CD8-positive, alpha-beta T cell (primary cell): ENCODE measurements at regions of chr4 and their contacts with region 1.

Region 1: GRCh38 chr4:112145326-112145819 is at the start of gene FAM241A:
- DNase-seq: peak; percentile 84 to 95 (median 90)
- ATAC-seq: peak; percentile 96
- H3K4me3 ChIP-seq: peak within 1 kb of the TSS; percentile 75 to 78
- H3K4me3 Mint-ChIP-seq: peak within 1 kb of the TSS; percentile 98
- H3K27ac ChIP-seq: peak within 1 kb of the TSS; percentile 69
- H3K27ac Mint-ChIP-seq: peak within 1 kb of the TSS; percentile 94
- H3K4me1 ChIP-seq: peaks cover 10% of the 10 kb centered on the region
- H3K4me1 Mint-ChIP-seq: peaks cover 29% of the 10 kb centered on the region
- H3K27me3 ChIP-seq: no peaks in the 10 kb centered on the region
- H3K27me3 Mint-ChIP-seq: no peaks in the 10 kb centered on the region
- CTCF ChIP-seq: no peak
- total RNA-seq, gene FAM241A: 0.67 to 0.90 TPM

Region 2: DNA sequence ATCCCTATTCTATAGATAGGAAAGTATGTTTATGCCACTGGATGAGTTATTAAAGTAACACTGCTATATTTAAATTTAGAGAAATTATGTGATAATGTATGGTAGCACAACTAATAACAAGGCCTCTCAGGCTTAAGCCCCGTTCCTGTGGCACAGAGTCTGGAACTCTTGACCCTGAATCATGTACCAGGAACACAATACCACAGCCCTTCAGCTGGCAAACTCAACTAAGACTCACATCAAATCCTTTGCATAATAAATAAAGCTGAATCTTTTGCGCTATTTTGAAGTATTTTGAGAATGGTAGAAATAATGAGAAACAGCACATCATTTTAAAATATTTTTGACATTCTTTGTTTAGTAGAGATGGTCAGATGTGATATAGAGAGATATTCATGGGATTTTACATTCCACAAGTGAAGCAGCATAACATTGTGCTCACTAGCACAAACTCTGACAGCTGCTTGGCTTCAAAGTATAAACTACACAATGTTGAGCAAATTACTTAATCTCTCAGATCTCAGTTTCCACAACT is 478.5 kb before region 1 on chr4:
- CTCF ChIA-PET with region 1: no interaction called
- POLR2A ChIA-PET with region 1: no interaction called
- intact Hi-C with region 1: no loop called
- DNase-seq: no peak
- ATAC-seq: no peak
- H3K4me3 ChIP-seq: no peak overlapping the region
- H3K4me3 Mint-ChIP-seq: no peak overlapping the region
- H3K27ac ChIP-seq: no peak overlapping the region
- H3K27ac Mint-ChIP-seq: no peak overlapping the region
- H3K4me1 ChIP-seq: no peaks in the 10 kb centered on the region
- H3K4me1 Mint-ChIP-seq: no peaks in the 10 kb centered on the region
- H3K27me3 ChIP-seq: no peaks in the 10 kb centered on the region
- H3K27me3 Mint-ChIP-seq: no peaks in the 10 kb centered on the region
- CTCF ChIP-seq: no peak

Region 3: DNA sequence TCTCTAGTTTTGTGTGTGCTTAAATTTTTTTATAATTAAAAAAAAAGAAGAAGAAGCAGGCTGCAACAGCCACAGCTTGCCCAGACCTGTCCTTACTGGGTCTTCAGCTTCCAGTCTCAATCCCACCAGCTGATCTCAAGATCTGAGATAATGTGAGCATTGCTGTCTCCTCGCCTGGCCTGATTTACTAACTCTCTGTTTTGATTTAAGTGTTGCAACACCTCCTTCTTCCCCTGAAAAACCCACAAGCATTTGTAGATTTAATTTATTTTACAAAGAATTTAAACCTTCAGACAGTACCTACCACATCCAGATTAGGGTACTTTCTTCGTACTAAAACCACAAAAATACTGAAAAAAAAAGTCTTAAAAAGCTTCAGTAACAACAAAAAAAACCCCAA is 37.9 kb after region 1 on chr4:
- CTCF ChIA-PET with region 1: no interaction called
- POLR2A ChIA-PET with region 1: no interaction called
- intact Hi-C with region 1: loop called (anchors 5 kb)
- DNase-seq: peak in 2 of 9 experiments; percentile 28 to 65
- ATAC-seq: peak; percentile 77
- H3K4me3 ChIP-seq: no peak overlapping the region
- H3K4me3 Mint-ChIP-seq: peak overlapping the region; percentile 5
- H3K27ac ChIP-seq: no peak overlapping the region
- H3K27ac Mint-ChIP-seq: peak overlapping the region; percentile 27
- H3K4me1 ChIP-seq: peaks cover 26% of the 10 kb centered on the region
- H3K4me1 Mint-ChIP-seq: peaks cover 43% of the 10 kb centered on the region
- H3K27me3 ChIP-seq: no peaks in the 10 kb centered on the region
- H3K27me3 Mint-ChIP-seq: no peaks in the 10 kb centered on the region
- CTCF ChIP-seq: no peak

Region 4: GRCh38 chr4:112321776-112322684 is 176.7 kb after region 1 on chr4:
- CTCF ChIA-PET with region 1: no interaction called
- POLR2A ChIA-PET with region 1: no interaction called
- intact Hi-C with region 1: loop called in 1 of 2 experiments (anchors 5 kb)
- DNase-seq: peak; percentile 58 to 85 (median 76)
- ATAC-seq: peak; percentile 99
- H3K4me3 ChIP-seq: no peak overlapping the region
- H3K4me3 Mint-ChIP-seq: no peak overlapping the region
- H3K27ac ChIP-seq: no peak overlapping the region
- H3K27ac Mint-ChIP-seq: no peak overlapping the region
- H3K4me1 ChIP-seq: peaks cover 10% of the 10 kb centered on the region
- H3K4me1 Mint-ChIP-seq: peaks cover 5% of the 10 kb centered on the region
- H3K27me3 ChIP-seq: no peaks in the 10 kb centered on the region
- H3K27me3 Mint-ChIP-seq: no peaks in the 10 kb centered on the region
- CTCF ChIP-seq: peak; percentile 96

Region 5: GRCh38 chr4:112523764-112524505 is 378.6 kb after region 1 on chr4:
- CTCF ChIA-PET with region 1: no interaction called
- POLR2A ChIA-PET with region 1: interaction called, 3 read pairs
- intact Hi-C with region 1: loop called in 1 of 2 experiments (anchors 5 kb)
- DNase-seq: peak; percentile 54 to 88 (median 73)
- ATAC-seq: peak; percentile 83
- H3K4me3 ChIP-seq: peak overlapping the region; percentile 31 to 42
- H3K4me3 Mint-ChIP-seq: peak overlapping the region; percentile 82
- H3K27ac ChIP-seq: no peak overlapping the region
- H3K27ac Mint-ChIP-seq: no peak overlapping the region
- H3K4me1 ChIP-seq: peaks cover 18% of the 10 kb centered on the region
- H3K4me1 Mint-ChIP-seq: peaks cover 33% of the 10 kb centered on the region
- H3K27me3 ChIP-seq: peaks cover 33 to 37% of the 10 kb centered on the region in 2 experiments
- H3K27me3 Mint-ChIP-seq: peaks cover 44% of the 10 kb centered on the region
- CTCF ChIP-seq: peak; percentile 76